Body of pancreas (tissue), 4 donors: ENCODE measurements at regions of chr6 and their contacts with region 1.

Region 1: DNA sequence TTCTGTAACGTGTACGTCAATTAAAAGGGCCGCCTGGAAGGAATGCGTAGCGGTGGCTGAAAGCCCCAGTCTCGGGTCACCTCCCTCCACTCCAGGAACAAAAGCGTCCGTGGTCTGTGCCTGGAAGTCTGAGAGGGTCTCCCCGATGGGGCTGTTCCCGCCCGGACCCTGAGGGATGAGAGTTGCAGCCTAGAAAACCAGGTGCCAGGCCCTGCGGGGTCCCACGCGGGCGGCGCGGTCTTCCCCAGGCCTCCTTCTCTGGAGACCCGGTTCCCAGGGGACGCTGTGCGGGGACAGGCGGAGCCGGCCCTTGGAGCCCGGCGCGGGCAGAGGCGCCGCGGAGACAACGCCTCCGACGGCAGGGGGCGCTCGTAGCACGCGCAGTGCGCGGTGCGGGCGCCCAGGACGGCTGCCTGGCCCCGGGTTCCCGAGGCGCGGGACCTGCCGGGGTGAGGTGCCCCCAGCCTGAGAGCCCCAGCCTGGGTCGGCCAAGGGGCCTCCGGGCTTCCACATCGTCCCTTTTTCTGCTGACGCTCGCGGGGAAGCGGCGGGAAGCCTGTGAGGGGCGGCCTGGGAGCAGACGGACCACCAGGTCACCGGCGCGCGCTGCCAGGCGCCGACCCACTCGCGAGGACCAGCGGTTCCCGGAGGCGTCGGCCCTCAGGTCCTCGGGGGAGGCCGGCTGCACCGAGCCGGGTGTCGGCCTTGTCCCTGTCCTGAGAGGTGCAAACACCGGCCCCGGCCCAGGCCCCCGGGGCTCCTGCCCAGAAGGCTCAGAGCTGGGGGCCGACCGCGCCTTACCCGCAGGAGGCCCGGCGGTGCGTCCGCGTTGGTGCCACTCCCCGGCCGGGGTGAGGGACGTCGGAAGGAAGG is 5.3 kb upstream of the FOXC1 start:
- DNase-seq: peak; percentile 54 to 76 (median 72)
- ATAC-seq: peak; percentile 84
- H3K4me3 ChIP-seq: peak overlapping the region in 1 of 2 donors; percentile 20
- H3K27ac ChIP-seq: no peak overlapping the region
- H3K4me1 ChIP-seq: peaks cover 45% of the 10 kb centered on the region
- H3K27me3 ChIP-seq: peaks cover 0 to 41% of the 10 kb centered on the region in 2 donors
- CTCF ChIP-seq: peak; percentile 62 to 97 (median 95)
- POLR2A ChIP-seq: no peak

Region 2: GRCh38 chr6:2196079-2196679 is 591.8 kb after region 1 on chr6:
- intact Hi-C with region 1: loop called (anchors 5 kb)
- DNase-seq: peak; percentile 43 to 66 (median 54)
- ATAC-seq: peak; percentile 78
- H3K4me3 ChIP-seq: no peak overlapping the region
- H3K27ac ChIP-seq: no peak overlapping the region
- H3K4me1 ChIP-seq: peaks cover 7% of the 10 kb centered on the region
- H3K27me3 ChIP-seq: no peaks in the 10 kb centered on the region
- CTCF ChIP-seq: peak; percentile 53 to 87 (median 80)
- POLR2A ChIP-seq: no peak